Dorsolateral prefrontal cortex (tissue), 120 donors: ENCODE measurements at regions of chr13 and their contacts with region 1.

Region 1: DNA sequence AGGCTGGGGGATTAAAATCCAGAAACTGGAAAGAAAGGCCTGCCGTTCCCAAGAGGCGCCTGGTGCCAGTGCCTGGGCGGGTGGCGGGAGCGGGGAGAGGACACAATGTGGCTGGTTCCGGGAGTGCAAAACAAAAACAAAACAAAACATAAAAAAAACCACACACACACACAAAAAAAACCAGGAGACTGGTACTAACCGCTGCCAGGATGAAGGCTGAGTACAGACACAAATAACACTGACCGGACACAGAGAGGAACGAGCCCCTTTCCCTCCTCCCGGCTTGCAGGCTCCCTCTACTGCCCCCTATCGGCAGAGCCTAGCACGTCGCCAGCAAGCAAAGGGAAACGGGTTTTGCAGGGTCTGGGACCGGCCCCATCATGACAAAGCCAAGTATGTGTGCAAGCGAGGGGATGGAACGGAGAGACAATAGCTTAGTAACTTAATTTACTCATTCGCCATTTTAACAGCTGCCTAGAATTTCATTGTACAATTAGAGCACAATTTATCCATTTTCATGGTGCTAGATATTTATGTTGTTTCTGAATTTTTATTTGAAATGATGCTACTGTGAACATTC is 17.9 kb upstream of the ZDHHC20 start:
- DNase-seq: peak; percentile 71 to 90 (median 86)
- H3K4me3 ChIP-seq: peak overlapping the region; percentile 3 to 73 (median 51)
- H3K27ac ChIP-seq: peak overlapping the region; percentile 5 to 99 (median 93)
- H3K27me3 ChIP-seq: no peaks in the 10 kb centered on the region
- CTCF ChIP-seq: peak; percentile 91 to 99 (median 97)

Region 2: DNA sequence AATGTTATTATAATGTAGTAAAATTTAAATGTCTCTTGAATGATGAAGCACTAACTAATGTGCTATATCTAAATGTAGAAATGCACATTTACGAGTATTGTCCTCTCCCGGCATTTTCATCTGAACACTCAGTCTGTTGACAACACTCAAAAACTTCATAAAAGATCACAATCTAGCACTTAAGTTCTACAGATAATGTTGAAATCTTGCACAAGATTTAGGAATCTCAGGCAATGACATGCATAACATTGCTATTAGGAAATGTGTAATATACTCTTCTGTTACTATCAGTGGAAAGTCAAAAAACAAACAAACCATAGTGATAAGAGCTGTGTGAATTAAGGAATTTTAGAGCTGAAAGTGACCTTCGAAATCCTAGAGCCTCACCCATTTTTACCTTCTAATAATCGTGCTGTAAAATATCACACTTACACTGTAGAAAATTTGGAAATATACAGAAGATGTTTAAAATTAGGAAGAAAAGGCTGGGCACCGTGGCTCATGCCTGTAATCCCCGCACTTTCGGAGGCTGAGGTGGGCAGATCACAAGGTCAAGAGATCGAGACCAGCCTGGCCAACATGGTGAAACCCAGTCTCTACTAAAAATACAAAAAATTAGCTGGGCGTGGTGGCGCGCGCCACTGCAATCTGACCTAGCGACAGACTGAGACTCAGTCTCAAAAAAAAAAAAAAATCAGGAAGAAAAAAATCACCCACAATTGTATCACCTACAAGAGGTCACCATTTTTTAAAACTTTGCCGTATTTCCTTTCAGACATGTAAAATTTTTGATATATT is 536.7 kb before region 1 on chr13:
- intact Hi-C with region 1: loop called (anchors 5 kb)
- DNase-seq: no peak
- H3K4me3 ChIP-seq: no peak overlapping the region
- H3K27ac ChIP-seq: no peak overlapping the region
- H3K27me3 ChIP-seq: peaks cover 0 to 2% (median 0%) of the 10 kb centered on the region in 45 donors
- CTCF ChIP-seq: no peak

Region 3: GRCh38 chr13:21111546-21111945 is 365.4 kb before region 1 on chr13:
- intact Hi-C with region 1: loop called in 1 of 2 experiments (anchors 2 kb)
- DNase-seq: no peak
- H3K4me3 ChIP-seq: no peak overlapping the region
- H3K27ac ChIP-seq: no peak overlapping the region
- H3K27me3 ChIP-seq: no peaks in the 10 kb centered on the region
- CTCF ChIP-seq: no peak

Region 4: GRCh38 chr13:21176220-21176982 is 300.6 kb before region 1 on chr13 and contains the starts of genes MRPL57 and SKA3:
- intact Hi-C with region 1: loop called in 1 of 2 experiments (anchors 5 kb)
- DNase-seq: peak; percentile 82 to 96 (median 89)
- H3K4me3 ChIP-seq: peak within 1 kb of the TSS; percentile 71 to 100 (median 92)
- H3K27ac ChIP-seq: peak within 1 kb of the TSS; percentile 75 to 98 (median 92)
- H3K27me3 ChIP-seq: no peaks in the 10 kb centered on the region
- CTCF ChIP-seq: peak in 51 of 56 donors; percentile 4 to 65 (median 44)
- total RNA-seq, gene MRPL57: 12.7 to 28.6 (median 19.2) TPM
- total RNA-seq, gene SKA3: 0.16 to 3.6 (median 1.3) TPM in 117 of 120 experiments, not detected in the others

Region 5: GRCh38 chr13:21717817-21718216 is 240.8 kb after region 1 on chr13:
- intact Hi-C with region 1: no loop called
- DNase-seq: no peak
- H3K4me3 ChIP-seq: no peak overlapping the region
- H3K27ac ChIP-seq: no peak overlapping the region
- H3K27me3 ChIP-seq: peaks cover 0 to 24% (median 0%) of the 10 kb centered on the region in 45 donors
- CTCF ChIP-seq: no peak